Prostate gland (tissue), 2 donors: ENCODE measurements at regions of chr7 and their contacts with region 1.

Region 1: DNA sequence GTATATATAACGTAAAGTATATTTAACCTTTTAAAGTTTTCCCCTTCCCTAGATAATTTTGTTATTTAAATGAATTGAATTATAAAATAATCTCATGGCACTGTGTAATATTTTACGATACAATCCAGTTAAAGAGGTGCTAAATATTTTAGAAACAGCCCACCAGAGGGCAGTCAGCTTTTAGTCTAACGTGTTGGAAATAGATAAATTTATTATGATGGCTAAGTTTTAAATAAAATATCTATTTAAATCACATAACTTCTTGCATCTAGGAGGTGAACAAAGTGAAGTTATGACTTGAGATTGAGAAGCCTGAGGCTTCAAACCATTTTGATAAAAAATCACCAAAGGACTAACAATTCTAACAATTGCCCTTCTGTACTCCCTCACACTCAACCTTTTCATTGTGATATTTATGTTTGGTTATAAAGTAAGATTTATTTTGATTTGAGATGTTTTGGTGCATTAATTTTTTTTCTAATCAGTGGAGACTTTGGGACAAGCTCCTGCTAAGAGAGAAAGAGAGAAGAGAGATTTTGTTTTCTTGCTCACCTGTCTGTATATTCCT is 171.5 kb upstream of the SP4 start:
- DNase-seq: peak; percentile 41
- H3K4me3 ChIP-seq: no peak overlapping the region
- H3K27ac ChIP-seq: no peak overlapping the region
- H3K4me1 ChIP-seq: no peaks in the 10 kb centered on the region
- H3K27me3 ChIP-seq: no peaks in the 10 kb centered on the region
- CTCF ChIP-seq: peak; percentile 25 to 78 (median 68)
- POLR2A ChIP-seq: no peak

Region 2: GRCh38 chr7:21427182-21427870 is 170.9 kb after region 1 on chr7:
- intact Hi-C with region 1: no loop called
- DNase-seq: peak; percentile 99
- H3K4me3 ChIP-seq: peak overlapping the region; percentile 78 to 80
- H3K27ac ChIP-seq: peak overlapping the region; percentile 99
- H3K4me1 ChIP-seq: no peaks in the 10 kb centered on the region
- H3K27me3 ChIP-seq: no peaks in the 10 kb centered on the region
- CTCF ChIP-seq: peak in 3 of 4 experiments; percentile 20 to 71 (median 60)
- POLR2A ChIP-seq: peak; percentile 70

Region 3: GRCh38 chr7:21507626-21508343 is 251.4 kb after region 1 on chr7:
- intact Hi-C with region 1: loop called (anchors 5 kb)
- DNase-seq: peak; percentile 18
- H3K4me3 ChIP-seq: no peak overlapping the region
- H3K27ac ChIP-seq: no peak overlapping the region
- H3K4me1 ChIP-seq: no peaks in the 10 kb centered on the region
- H3K27me3 ChIP-seq: no peaks in the 10 kb centered on the region
- CTCF ChIP-seq: peak in 3 of 4 experiments; percentile 50 to 62 (median 56)
- POLR2A ChIP-seq: no peak

Region 4: GRCh38 chr7:21639206-21639856 is 382.9 kb after region 1 on chr7:
- intact Hi-C with region 1: no loop called
- DNase-seq: no peak
- H3K4me3 ChIP-seq: no peak overlapping the region
- H3K27ac ChIP-seq: no peak overlapping the region
- H3K4me1 ChIP-seq: no peaks in the 10 kb centered on the region
- H3K27me3 ChIP-seq: no peaks in the 10 kb centered on the region
- CTCF ChIP-seq: no peak
- POLR2A ChIP-seq: no peak